Naive thymus-derived CD4-positive, alpha-beta T cell (primary cell): ENCODE measurements at regions of chr4 and their contacts with region 1.

Region 1: GRCh38 chr4:119212234-119212963 is at the start of gene USP53:
- DNase-seq: peak; percentile 92 to 98 (median 96)
- ATAC-seq: peak; percentile 96
- H3K4me3 ChIP-seq: peak within 1 kb of the TSS; percentile 91
- H3K4me3 Mint-ChIP-seq: peak within 1 kb of the TSS; percentile 89 to 100 (median 94)
- H3K27ac ChIP-seq: peak within 1 kb of the TSS; percentile 77
- H3K27ac Mint-ChIP-seq: peak within 1 kb of the TSS; percentile 92 to 100 (median 96)
- H3K4me1 ChIP-seq: peaks cover 0 to 10% of the 10 kb centered on the region in 2 donors
- H3K4me1 Mint-ChIP-seq: peaks cover 27 to 65% (median 39%) of the 10 kb centered on the region in 7 donors
- H3K27me3 ChIP-seq: no peaks in the 10 kb centered on the region
- H3K27me3 Mint-ChIP-seq: peaks cover 0 to 4% (median 0%) of the 10 kb centered on the region in 5 donors
- total RNA-seq, gene USP53: 7.3 to 29.8 (median 21.2) TPM

Region 2: DNA sequence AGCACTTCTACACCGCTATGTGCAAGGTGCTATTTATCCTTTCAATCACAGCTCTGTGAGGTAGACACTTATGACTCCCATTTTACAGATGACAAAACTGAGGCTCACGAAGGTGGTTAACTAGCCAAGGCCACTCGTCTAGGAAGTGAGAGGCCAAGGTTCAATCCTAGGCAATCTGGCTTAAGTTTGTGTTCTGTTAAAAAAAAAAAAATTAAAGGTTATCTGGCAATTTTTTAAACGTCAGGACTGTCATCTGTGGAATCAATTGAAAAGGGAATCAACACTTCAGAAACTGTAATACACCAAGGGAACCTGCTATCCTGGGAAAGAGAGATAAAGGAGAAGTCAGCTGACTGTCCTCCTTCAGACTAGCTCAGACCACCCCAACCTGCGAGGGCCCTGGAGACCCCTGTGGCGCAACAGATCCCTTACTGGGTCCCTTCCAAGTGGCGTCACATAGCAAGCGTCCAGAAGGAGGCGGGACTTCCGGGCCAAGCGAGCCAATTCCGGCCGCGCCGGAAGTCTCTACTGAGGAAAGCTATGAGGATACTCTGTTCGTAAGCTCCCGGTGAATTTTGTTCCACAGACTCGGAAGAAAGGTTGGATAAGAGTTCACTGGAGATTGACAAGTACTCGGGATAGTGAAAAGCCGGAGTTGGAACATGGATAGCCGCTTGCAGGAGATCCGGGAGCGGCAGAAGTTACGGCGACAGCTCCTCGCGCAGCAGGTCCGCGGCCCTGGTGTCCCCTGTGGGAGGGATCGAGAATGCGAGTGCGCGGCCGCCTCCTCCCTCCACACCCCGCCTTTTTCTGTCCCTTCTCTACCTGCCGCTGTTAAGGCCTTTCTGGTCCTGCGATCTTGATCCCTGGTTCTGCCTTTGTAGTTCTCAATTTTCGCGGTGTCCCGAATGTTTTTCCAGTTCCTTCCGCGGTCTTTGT is 527.3 kb before region 1 on chr4 and contains the start of gene METTL14:
- CTCF ChIA-PET with region 1: no interaction called
- POLR2A ChIA-PET with region 1: interaction called, 3 read pairs
- intact Hi-C with region 1: loop called (anchors 1 kb)
- DNase-seq: peak; percentile 71 to 86 (median 82)
- ATAC-seq: peak; percentile 96
- H3K4me3 ChIP-seq: peak within 1 kb of the TSS; percentile 84
- H3K4me3 Mint-ChIP-seq: peak within 1 kb of the TSS; percentile 91 to 99 (median 97)
- H3K27ac ChIP-seq: peak within 1 kb of the TSS; percentile 83
- H3K27ac Mint-ChIP-seq: peak within 1 kb of the TSS; percentile 84 to 99 (median 96)
- H3K4me1 ChIP-seq: peaks cover 13 to 14% of the 10 kb centered on the region in 2 donors
- H3K4me1 Mint-ChIP-seq: peaks cover 12 to 41% (median 33%) of the 10 kb centered on the region in 7 donors
- H3K27me3 ChIP-seq: no peaks in the 10 kb centered on the region
- H3K27me3 Mint-ChIP-seq: no peaks in the 10 kb centered on the region
- total RNA-seq, gene METTL14: 46.9 to 64.8 (median 48.7) TPM

Region 3: DNA sequence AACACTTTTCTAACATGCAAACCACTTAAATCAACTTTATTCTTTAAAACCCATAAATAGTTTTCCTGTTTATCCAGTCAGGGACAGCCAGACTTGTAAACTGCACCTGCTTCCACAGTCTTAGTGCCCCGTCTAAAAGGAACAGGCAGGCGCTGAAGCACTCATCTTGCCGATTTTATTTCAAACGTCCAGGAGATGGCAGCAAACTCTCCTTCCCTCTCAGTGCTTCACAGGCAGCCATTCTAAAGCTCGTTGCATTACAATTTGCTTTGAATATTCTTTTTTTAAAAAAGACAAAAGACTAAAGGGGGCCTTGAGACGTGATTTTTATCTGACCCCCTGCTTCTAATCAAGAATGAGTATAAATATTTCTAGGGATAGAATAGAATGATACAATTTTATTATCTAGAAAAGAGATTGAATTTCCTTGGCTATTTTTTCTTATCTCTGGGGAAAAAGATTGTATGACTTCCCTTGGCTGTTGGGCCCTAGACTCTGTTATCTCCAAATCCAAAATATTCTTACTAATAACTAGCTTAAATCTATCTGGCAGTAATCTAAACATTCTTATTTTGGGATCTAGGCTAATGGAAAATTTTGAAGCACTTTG is 170.3 kb before region 1 on chr4:
- CTCF ChIA-PET with region 1: interaction called, 3 read pairs
- POLR2A ChIA-PET with region 1: interaction called, 8 read pairs
- intact Hi-C with region 1: loop called (anchors 1 to 2 kb)
- DNase-seq: peak in 7 of 9 donors; percentile 30 to 72 (median 61)
- ATAC-seq: peak; percentile 94
- H3K4me3 ChIP-seq: no peak overlapping the region
- H3K4me3 Mint-ChIP-seq: peak overlapping the region in 1 of 10 donors; percentile 25
- H3K27ac ChIP-seq: no peak overlapping the region
- H3K27ac Mint-ChIP-seq: no peak overlapping the region
- H3K4me1 ChIP-seq: no peaks in the 10 kb centered on the region
- H3K4me1 Mint-ChIP-seq: peaks cover 0 to 12% (median 0%) of the 10 kb centered on the region in 7 donors
- H3K27me3 ChIP-seq: no peaks in the 10 kb centered on the region
- H3K27me3 Mint-ChIP-seq: peaks cover 0 to 3% (median 0%) of the 10 kb centered on the region in 5 donors

Region 4: DNA sequence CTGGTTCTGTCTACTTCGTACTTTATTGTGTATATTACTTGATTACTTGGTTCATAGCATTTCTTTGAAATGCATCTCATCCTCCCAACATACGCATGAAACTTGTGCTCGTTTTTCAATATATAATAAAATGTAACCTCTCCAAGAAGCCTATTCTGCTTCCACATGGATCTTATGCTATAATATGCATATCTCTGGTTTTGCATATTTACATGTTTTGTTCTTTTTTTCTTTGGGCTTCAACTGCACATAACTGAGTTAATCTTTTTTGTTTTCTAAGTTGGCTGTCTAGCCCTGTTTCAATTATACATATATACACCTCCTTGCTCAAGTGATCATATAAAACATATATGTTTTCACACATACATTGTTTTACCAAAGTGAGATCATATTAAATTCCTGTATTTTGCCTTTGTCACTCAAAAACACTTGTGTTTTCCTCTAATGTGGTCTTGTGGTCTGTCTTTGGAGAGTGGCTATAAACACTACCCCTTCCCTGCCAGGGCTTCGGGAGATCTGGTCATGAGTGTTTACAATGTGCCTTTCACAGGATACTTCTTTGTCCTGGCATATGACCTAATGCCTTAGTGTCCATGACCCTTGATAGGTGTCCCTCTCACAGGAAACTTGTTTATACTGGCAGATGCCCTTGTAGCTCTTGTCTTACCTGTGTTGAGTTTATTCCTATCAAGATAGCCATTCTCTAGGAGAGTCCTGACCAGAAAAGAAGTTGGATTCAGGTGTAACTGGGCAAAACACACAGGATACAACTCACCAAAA is 17.7 kb after region 1 on chr4:
- CTCF ChIA-PET with region 1: no interaction called
- POLR2A ChIA-PET with region 1: interaction called, 11 read pairs
- intact Hi-C with region 1: no loop called
- DNase-seq: no peak
- ATAC-seq: no peak
- H3K4me3 ChIP-seq: no peak overlapping the region
- H3K4me3 Mint-ChIP-seq: peak overlapping the region in 3 of 10 donors; percentile 1 to 36 (median 6)
- H3K27ac ChIP-seq: no peak overlapping the region
- H3K27ac Mint-ChIP-seq: peak overlapping the region in 3 of 9 donors; percentile 25 to 53 (median 49)
- H3K4me1 ChIP-seq: peaks cover 0 to 9% of the 10 kb centered on the region in 2 donors
- H3K4me1 Mint-ChIP-seq: peaks cover 21 to 78% (median 38%) of the 10 kb centered on the region in 7 donors
- H3K27me3 ChIP-seq: no peaks in the 10 kb centered on the region
- H3K27me3 Mint-ChIP-seq: no peaks in the 10 kb centered on the region

Region 5: GRCh38 chr4:119271361-119272085 is 59.1 kb after region 1 on chr4:
- CTCF ChIA-PET with region 1: no interaction called
- POLR2A ChIA-PET with region 1: no interaction called
- intact Hi-C with region 1: no loop called
- DNase-seq: no peak
- ATAC-seq: no peak
- H3K4me3 ChIP-seq: no peak overlapping the region
- H3K4me3 Mint-ChIP-seq: no peak overlapping the region
- H3K27ac ChIP-seq: no peak overlapping the region
- H3K27ac Mint-ChIP-seq: peak overlapping the region in 2 of 9 donors; percentile 2 to 34
- H3K4me1 ChIP-seq: no peaks in the 10 kb centered on the region
- H3K4me1 Mint-ChIP-seq: peaks cover 0 to 16% (median 0%) of the 10 kb centered on the region in 7 donors
- H3K27me3 ChIP-seq: no peaks in the 10 kb centered on the region
- H3K27me3 Mint-ChIP-seq: no peaks in the 10 kb centered on the region

Region 6: GRCh38 chr4:119300101-119300978 is 87.9 kb after region 1 on chr4:
- CTCF ChIA-PET with region 1: interaction called, 3 read pairs
- POLR2A ChIA-PET with region 1: interaction called, 28 read pairs
- intact Hi-C with region 1: loop called (anchors 1 kb)
- DNase-seq: peak; percentile 84 to 94 (median 88)
- ATAC-seq: peak; percentile 97
- H3K4me3 ChIP-seq: peak overlapping the region; percentile 93
- H3K4me3 Mint-ChIP-seq: peak overlapping the region; percentile 92 to 100 (median 96)
- H3K27ac ChIP-seq: peak overlapping the region; percentile 90
- H3K27ac Mint-ChIP-seq: peak overlapping the region; percentile 98 to 100 (median 100)
- H3K4me1 ChIP-seq: peaks cover 5 to 22% of the 10 kb centered on the region in 2 donors
- H3K4me1 Mint-ChIP-seq: peaks cover 16 to 49% (median 43%) of the 10 kb centered on the region in 7 donors
- H3K27me3 ChIP-seq: no peaks in the 10 kb centered on the region
- H3K27me3 Mint-ChIP-seq: peaks cover 0 to 5% (median 0%) of the 10 kb centered on the region in 5 donors